Heart right ventricle (tissue), 16 donors: ENCODE measurements at regions of chr11 and their contacts with region 1.

Region 1: GRCh38 chr11:32809313-32809712 is 14.9 kb upstream of the CCDC73 start:
- DNase-seq: peak; percentile 30 to 62
- ATAC-seq: peak in 6 of 8 donors; percentile 63 to 91 (median 79)
- H3K4me3 ChIP-seq: no peak overlapping the region
- H3K27ac ChIP-seq: no peak overlapping the region
- H3K4me1 ChIP-seq: no peaks in the 10 kb centered on the region
- H3K27me3 ChIP-seq: peaks cover 0 to 6% (median 0%) of the 10 kb centered on the region in 7 donors
- CTCF ChIP-seq: peak; percentile 24 to 79 (median 68)

Region 2: DNA sequence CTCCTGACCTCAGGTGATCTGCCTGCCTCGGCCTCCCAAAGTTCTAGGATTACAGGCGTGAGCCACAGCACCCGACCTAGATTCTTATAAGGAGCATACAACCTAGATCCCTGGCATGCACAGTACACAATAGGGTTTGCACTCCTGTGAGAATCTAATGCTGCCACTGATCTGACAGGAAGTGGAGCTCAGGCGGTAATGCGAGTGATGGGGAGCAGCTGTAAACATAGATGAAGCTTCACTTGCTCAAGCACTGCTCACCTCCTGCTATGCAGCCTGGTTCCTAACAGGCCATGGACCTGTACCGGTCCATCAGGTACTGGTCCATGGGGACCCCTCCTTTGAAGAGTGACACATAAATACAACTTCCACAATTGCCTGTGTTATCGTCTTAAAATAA is 270.5 kb before region 1 on chr11:
- intact Hi-C with region 1: no loop called
- DNase-seq: no peak
- ATAC-seq: no peak
- H3K4me3 ChIP-seq: no peak overlapping the region
- H3K27ac ChIP-seq: no peak overlapping the region
- H3K4me1 ChIP-seq: no peaks in the 10 kb centered on the region
- H3K27me3 ChIP-seq: no peaks in the 10 kb centered on the region
- CTCF ChIP-seq: no peak

Region 3: DNA sequence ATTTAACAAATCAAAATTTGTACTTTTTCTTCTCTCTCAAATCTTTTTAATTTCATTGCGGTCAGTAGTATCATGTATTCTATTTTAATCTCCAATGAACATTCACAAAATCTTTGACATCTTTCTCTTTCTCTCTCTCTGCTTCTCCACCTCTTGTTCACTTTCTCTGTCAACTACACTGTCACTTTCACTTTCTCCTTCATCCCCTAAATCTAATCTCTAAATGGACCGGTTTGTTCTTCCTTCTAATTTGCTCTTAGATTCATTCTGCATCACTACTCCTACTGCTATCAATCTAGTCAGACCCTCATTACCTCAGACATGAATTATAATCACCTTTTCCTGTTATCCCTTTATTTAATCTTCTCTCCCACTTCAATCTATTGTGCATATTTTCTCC is 33.4 kb before region 1 on chr11:
- intact Hi-C with region 1: no loop called
- DNase-seq: no peak
- ATAC-seq: no peak
- H3K4me3 ChIP-seq: no peak overlapping the region
- H3K27ac ChIP-seq: no peak overlapping the region
- H3K4me1 ChIP-seq: peaks cover 0 to 3% (median 0%) of the 10 kb centered on the region in 9 donors
- H3K27me3 ChIP-seq: peaks cover 0 to 3% (median 0%) of the 10 kb centered on the region in 7 donors
- CTCF ChIP-seq: no peak

Region 4: DNA sequence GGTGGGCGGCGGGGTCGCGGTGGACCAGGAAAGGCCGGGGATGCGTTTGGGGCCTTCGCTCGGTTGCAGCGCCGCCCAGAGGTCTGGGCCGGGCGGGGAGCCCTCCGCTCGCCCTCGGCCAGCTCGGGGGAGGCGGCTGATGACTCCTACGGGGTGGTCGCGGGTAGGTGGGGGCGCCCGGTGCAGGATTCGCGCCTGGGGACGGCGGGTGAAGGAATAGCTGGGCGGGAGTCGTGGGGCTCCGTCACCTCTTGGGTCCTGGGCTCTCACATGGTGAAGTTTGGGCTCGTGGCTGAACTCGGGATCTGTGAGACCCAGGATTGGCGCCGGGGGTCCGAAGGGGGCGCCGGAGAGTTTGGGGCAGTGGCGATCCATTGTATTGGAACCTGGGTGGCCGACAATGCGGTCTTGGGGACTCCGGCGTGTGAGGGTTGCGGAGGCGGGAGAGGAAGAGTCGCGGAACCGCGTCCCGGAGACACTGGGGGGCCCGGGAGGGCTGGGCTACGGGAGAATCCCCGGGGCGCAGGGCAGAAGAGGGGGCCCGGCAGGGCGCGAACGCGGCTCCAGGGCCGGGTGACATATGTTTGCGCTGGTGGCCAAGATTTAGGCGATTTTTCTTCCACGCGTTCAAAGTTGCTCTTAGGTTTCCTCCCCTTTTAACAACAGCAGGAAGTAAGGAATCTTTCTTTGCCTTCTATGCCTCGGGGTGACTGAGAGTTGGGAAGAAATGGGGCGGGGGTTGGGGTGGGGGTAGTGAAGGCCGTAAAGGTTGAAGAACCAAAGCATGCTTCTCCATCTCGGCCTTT is 84.2 kb after region 1 on chr11:
- intact Hi-C with region 1: no loop called
- DNase-seq: peak; percentile 30 to 40
- ATAC-seq: peak; percentile 39 to 78 (median 66)
- H3K4me3 ChIP-seq: peak overlapping the region; percentile 84 to 99 (median 94)
- H3K27ac ChIP-seq: peak overlapping the region; percentile 88 to 98 (median 95)
- H3K4me1 ChIP-seq: peaks cover 2 to 34% (median 19%) of the 10 kb centered on the region in 9 donors
- H3K27me3 ChIP-seq: no peaks in the 10 kb centered on the region
- CTCF ChIP-seq: peak in 8 of 9 donors; percentile 17 to 69 (median 47)

Region 5: GRCh38 chr11:33214741-33215140 is 405.4 kb after region 1 on chr11:
- intact Hi-C with region 1: loop called in 1 of 10 experiments (anchors 5 kb)
- DNase-seq: no peak
- ATAC-seq: no peak
- H3K4me3 ChIP-seq: no peak overlapping the region
- H3K27ac ChIP-seq: peak overlapping the region in 1 of 10 donors; percentile 38
- H3K4me1 ChIP-seq: peaks cover 0 to 33% (median 0%) of the 10 kb centered on the region in 9 donors
- H3K27me3 ChIP-seq: no peaks in the 10 kb centered on the region
- CTCF ChIP-seq: no peak